ENCODE measurements at regions of chr5 and their contacts with region 1.

Region 1: GRCh38 chr5:173615884-173616576 is 420 bp downstream of the BOD1 start:
- DNase-seq: peak; percentile 66
- H3K4me3 ChIP-seq: peak overlapping the region; percentile 46 to 88 (median 63)
- H3K27ac ChIP-seq: peak overlapping the region; percentile 73
- H3K4me1 ChIP-seq: peaks cover 16% of the 10 kb centered on the region
- H3K27me3 ChIP-seq: no peaks in the 10 kb centered on the region
- CTCF ChIP-seq: peak; percentile 65 to 80

Region 2: DNA sequence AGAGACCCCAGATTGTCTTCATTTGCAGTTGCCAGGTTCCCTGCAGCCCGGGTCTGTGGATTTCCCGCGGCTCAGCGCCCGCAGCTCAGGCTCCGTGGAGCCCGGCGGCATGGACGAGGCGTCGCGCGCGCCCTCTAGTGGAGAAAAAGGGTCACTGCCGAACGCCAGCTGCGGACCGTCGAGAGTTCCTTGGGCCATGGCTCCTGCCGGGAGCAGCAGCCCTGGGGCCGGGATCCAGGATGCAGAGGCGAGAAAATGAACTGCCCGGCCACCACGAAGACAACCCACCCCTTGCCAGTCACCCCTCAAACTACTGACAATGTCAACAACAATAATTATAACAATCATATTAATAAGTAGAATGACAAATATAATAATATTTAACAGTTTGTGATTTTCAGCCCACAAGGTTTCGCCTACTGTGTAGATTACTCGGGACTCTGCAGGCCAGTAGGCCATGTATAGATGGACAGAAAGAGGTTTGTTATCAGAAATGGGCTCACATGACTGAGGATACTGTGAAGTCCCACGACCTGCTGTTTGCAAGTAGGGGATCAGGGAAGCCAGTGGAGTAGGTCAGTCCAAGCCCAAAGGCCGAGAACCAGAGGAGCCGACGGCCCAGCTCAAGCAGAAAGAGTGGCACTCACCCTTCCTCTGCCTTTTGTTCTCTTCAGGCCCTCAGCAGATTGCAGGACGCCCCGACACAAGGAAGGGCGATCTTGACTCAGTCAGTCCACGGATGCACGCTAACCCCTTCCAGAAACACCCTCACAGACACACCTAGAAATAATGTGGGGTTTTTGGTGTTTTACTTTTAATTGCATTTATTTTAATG is 42.7 kb before region 1 on chr5:
- CTCF ChIA-PET with region 1: no interaction called
- dilution Hi-C with region 1: loop called (anchors 5 kb)
- in situ Hi-C with region 1: no loop called
- intact Hi-C with region 1: no loop called
- DNase-seq: peak; percentile 37
- H3K4me3 ChIP-seq: peak overlapping the region in 1 of 3 experiments; percentile 16
- H3K27ac ChIP-seq: no peak overlapping the region
- H3K4me1 ChIP-seq: peaks cover 15% of the 10 kb centered on the region
- H3K27me3 ChIP-seq: no peaks in the 10 kb centered on the region
- CTCF ChIP-seq: peak; percentile 80 to 96

Region 3: GRCh38 chr5:173664154-173664526 is 48.1 kb after region 1 on chr5:
- CTCF ChIA-PET with region 1: no interaction called
- dilution Hi-C with region 1: no loop called
- in situ Hi-C with region 1: no loop called
- intact Hi-C with region 1: no loop called
- DNase-seq: no peak
- H3K4me3 ChIP-seq: no peak overlapping the region
- H3K27ac ChIP-seq: no peak overlapping the region
- H3K4me1 ChIP-seq: no peaks in the 10 kb centered on the region
- H3K27me3 ChIP-seq: no peaks in the 10 kb centered on the region
- CTCF ChIP-seq: no peak

Region 4: GRCh38 chr5:173917788-173918786 is 302.1 kb after region 1 on chr5:
- CTCF ChIA-PET with region 1: no interaction called
- dilution Hi-C with region 1: no loop called
- in situ Hi-C with region 1: no loop called
- intact Hi-C with region 1: loop called (anchors 1 kb)
- DNase-seq: peak; percentile 85
- H3K4me3 ChIP-seq: peak overlapping the region; percentile 45 to 75 (median 52)
- H3K27ac ChIP-seq: peak overlapping the region; percentile 97
- H3K4me1 ChIP-seq: peaks cover 16% of the 10 kb centered on the region
- H3K27me3 ChIP-seq: no peaks in the 10 kb centered on the region
- CTCF ChIP-seq: peak in 1 of 2 donors; percentile 37

Region 5: DNA sequence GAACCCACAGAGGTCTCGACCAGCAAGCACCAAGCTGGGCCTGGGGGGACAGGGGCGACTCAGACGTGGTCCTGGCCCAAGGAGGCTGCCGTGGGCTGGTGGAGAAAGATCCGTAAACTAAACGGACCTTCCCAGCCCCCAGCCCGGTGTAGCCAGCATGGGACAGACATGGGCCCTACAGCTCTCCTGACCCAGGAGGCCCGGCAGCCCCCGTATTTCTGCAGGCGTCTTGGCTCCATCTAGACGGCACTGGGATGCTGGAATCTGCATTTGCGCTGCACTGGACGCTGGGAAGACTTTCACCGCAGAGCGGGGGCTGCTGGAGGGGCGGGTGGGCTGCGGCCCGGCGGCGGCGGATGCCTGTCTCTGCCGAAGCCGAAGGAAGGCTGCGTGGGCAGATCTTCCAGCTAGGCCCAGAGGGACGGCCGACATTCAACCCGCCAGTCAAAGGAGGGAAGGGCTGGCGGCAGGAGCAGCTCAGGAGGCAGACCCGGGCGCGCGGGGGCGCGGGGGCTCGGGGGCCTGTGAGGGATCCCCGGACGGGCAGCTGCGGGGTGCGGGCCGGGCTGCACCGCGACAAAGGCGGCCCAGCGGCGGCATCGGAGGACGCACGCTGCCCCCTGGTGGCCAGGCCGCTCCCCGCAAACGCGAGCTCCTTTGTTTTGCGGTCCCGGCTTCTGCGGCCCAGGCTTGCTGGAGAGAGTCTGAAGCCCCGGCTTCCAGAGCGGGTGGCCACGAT is 695.7 kb after region 1 on chr5:
- CTCF ChIA-PET with region 1: interaction called, 3 read pairs
- dilution Hi-C with region 1: no loop called
- in situ Hi-C with region 1: loop called (anchors 5 to 10 kb)
- intact Hi-C with region 1: loop called (anchors 1 kb)
- DNase-seq: peak; percentile 29
- H3K4me3 ChIP-seq: peak overlapping the region; percentile 31 to 48 (median 43)
- H3K27ac ChIP-seq: no peak overlapping the region
- H3K4me1 ChIP-seq: peaks cover 3% of the 10 kb centered on the region
- H3K27me3 ChIP-seq: no peaks in the 10 kb centered on the region
- CTCF ChIP-seq: peak; percentile 46 to 78

Region 6: GRCh38 chr5:174724491-174725260 is 1108.6 kb after region 1 on chr5 and contains the start of gene MSX2:
- CTCF ChIA-PET with region 1: no interaction called
- dilution Hi-C with region 1: no loop called
- in situ Hi-C with region 1: no loop called
- intact Hi-C with region 1: loop called (anchors 10 kb)
- DNase-seq: peak; percentile 88
- H3K4me3 ChIP-seq: peak within 1 kb of the TSS; percentile 73 to 91 (median 74)
- H3K27ac ChIP-seq: peak within 1 kb of the TSS; percentile 3
- H3K4me1 ChIP-seq: peaks cover 6% of the 10 kb centered on the region
- H3K27me3 ChIP-seq: peaks cover 18% of the 10 kb centered on the region
- CTCF ChIP-seq: no peak
- total RNA-seq, gene MSX2: 2.0 to 3.3 TPM